ENCODE measurements at regions of chr5 and their contacts with region 1.

Region 1: DNA sequence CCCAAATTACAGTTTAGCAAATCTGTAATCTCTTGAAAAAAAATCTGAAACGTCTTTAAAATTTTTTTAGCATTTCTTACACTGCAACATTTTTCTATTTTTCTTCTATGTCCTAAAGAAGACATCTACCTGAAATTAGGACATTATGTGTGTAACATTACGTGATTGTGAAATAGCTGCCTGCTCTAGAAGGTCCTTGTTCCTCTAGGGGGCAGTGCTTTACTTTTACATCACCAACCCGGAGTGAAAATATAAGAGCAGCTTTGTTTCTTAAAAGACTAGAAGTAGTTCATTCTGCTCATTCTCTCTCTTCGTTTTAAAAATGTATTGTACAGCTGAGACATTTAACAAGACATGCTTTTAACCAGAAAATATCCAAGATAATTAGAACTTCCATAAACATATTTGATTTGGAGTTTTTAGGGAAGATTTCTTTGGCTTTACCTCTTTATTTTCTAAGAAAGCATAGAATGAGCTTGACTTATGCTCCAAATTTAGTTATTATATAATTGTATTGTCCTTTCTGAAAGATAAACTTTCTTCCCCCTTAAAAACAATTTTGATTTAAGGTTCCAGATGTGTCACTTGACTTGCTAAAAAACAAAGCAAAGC is 48.1 kb upstream of the RIOK2 start:
- DNase-seq: peak in 7 of 9 donors; percentile 19 to 58 (median 43)
- ATAC-seq: peak; percentile 73
- H3K4me3 ChIP-seq: no peak overlapping the region
- H3K4me3 Mint-ChIP-seq: no peak overlapping the region
- H3K27ac ChIP-seq: no peak overlapping the region
- H3K27ac Mint-ChIP-seq: no peak overlapping the region
- H3K4me1 ChIP-seq: no peaks in the 10 kb centered on the region
- H3K4me1 Mint-ChIP-seq: peaks cover 0 to 5% (median 0%) of the 10 kb centered on the region in 7 donors
- H3K27me3 ChIP-seq: no peaks in the 10 kb centered on the region
- H3K27me3 Mint-ChIP-seq: peaks cover 0 to 13% (median 0%) of the 10 kb centered on the region in 5 donors

Region 2: DNA sequence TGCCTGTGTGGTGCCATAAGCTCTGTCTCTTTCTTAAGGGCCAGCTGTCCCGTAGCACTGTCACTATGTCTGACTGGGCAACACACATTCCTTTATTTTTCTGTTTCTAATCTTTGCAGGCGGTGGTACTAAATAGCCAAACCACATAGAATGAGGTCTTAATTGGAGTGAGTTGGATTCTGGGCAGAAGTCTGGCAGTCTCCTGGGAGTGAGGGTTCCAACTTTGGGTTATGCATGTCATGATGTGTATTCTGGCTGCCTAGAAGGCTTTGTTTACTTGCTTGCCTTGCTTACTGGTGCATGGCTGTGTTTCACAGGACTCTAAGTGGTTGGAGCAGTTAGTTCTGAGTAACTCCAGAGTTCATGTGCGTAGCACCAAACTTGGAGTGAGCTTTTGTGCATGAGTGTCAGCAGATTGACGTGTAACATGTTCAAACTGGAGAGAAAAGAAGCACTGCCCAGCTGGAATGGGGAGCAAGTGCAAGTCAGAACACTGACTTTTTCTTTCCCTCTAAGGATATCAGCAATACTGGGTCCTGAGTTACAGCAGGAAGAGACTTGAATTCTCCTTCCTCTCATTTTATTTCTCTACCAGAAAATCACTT is 983.9 kb before region 1 on chr5:
- CTCF ChIA-PET with region 1: no interaction called
- POLR2A ChIA-PET with region 1: no interaction called
- intact Hi-C with region 1: no loop called
- DNase-seq: no peak
- ATAC-seq: no peak
- H3K4me3 ChIP-seq: no peak overlapping the region
- H3K4me3 Mint-ChIP-seq: no peak overlapping the region
- H3K27ac ChIP-seq: no peak overlapping the region
- H3K27ac Mint-ChIP-seq: no peak overlapping the region
- H3K4me1 ChIP-seq: no peaks in the 10 kb centered on the region
- H3K4me1 Mint-ChIP-seq: no peaks in the 10 kb centered on the region
- H3K27me3 ChIP-seq: no peaks in the 10 kb centered on the region
- H3K27me3 Mint-ChIP-seq: peaks cover 11 to 46% (median 39%) of the 10 kb centered on the region in 5 donors

Region 3: DNA sequence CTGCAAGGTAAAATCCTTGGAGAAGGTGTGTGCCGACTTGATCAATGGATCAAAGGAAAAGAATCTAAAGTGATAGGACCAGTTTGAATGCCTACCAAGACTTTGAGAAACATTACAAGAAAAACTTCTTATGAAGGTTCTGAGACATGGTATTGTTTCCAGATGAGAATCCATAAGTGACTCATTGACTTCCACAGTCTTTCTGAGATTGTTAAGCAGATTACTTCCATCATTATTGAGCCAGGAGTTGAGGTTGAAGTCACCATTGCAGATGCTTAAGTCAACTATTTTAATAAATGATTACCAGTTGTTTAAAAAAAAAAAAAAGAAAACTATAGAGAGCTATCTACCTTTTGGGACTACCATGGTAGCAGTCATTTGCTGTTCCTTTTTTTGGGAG is 288.2 kb before region 1 on chr5:
- CTCF ChIA-PET with region 1: no interaction called
- POLR2A ChIA-PET with region 1: no interaction called
- intact Hi-C with region 1: no loop called
- DNase-seq: no peak
- ATAC-seq: no peak
- H3K4me3 ChIP-seq: no peak overlapping the region
- H3K4me3 Mint-ChIP-seq: peak overlapping the region in 2 of 10 donors; percentile 23 to 34
- H3K27ac ChIP-seq: peak overlapping the region; percentile 52
- H3K27ac Mint-ChIP-seq: peak overlapping the region in 5 of 9 donors; percentile 16 to 89 (median 65)
- H3K4me1 ChIP-seq: peaks cover 24 to 51% of the 10 kb centered on the region in 2 donors
- H3K4me1 Mint-ChIP-seq: peaks cover 53 to 97% (median 88%) of the 10 kb centered on the region in 7 donors
- H3K27me3 ChIP-seq: no peaks in the 10 kb centered on the region
- H3K27me3 Mint-ChIP-seq: no peaks in the 10 kb centered on the region

Region 4: GRCh38 chr5:97534166-97534565 is 303.0 kb after region 1 on chr5:
- CTCF ChIA-PET with region 1: no interaction called
- POLR2A ChIA-PET with region 1: no interaction called
- intact Hi-C with region 1: loop called in 1 of 2 experiments (anchors 1 kb)
- DNase-seq: no peak
- ATAC-seq: peak; percentile 76
- H3K4me3 ChIP-seq: no peak overlapping the region
- H3K4me3 Mint-ChIP-seq: no peak overlapping the region
- H3K27ac ChIP-seq: no peak overlapping the region
- H3K27ac Mint-ChIP-seq: peak overlapping the region in 2 of 9 donors; percentile 5 to 39
- H3K4me1 ChIP-seq: no peaks in the 10 kb centered on the region
- H3K4me1 Mint-ChIP-seq: peaks cover 0 to 17% (median 0%) of the 10 kb centered on the region in 7 donors
- H3K27me3 ChIP-seq: no peaks in the 10 kb centered on the region
- H3K27me3 Mint-ChIP-seq: peaks cover 0 to 4% (median 3%) of the 10 kb centered on the region in 5 donors

Region 5: GRCh38 chr5:97600486-97600885 is 369.4 kb after region 1 on chr5:
- CTCF ChIA-PET with region 1: no interaction called
- POLR2A ChIA-PET with region 1: no interaction called
- intact Hi-C with region 1: no loop called
- DNase-seq: no peak
- ATAC-seq: no peak
- H3K4me3 ChIP-seq: no peak overlapping the region
- H3K4me3 Mint-ChIP-seq: no peak overlapping the region
- H3K27ac ChIP-seq: no peak overlapping the region
- H3K27ac Mint-ChIP-seq: no peak overlapping the region
- H3K4me1 ChIP-seq: no peaks in the 10 kb centered on the region
- H3K4me1 Mint-ChIP-seq: no peaks in the 10 kb centered on the region
- H3K27me3 ChIP-seq: no peaks in the 10 kb centered on the region
- H3K27me3 Mint-ChIP-seq: peaks cover 0 to 4% (median 0%) of the 10 kb centered on the region in 5 donors

Region 6: GRCh38 chr5:98349251-98349995 is 1118.3 kb after region 1 on chr5:
- CTCF ChIA-PET with region 1: no interaction called
- POLR2A ChIA-PET with region 1: no interaction called
- intact Hi-C with region 1: loop called in 1 of 2 experiments (anchors 2 kb)
- DNase-seq: no peak
- ATAC-seq: no peak
- H3K4me3 ChIP-seq: no peak overlapping the region
- H3K4me3 Mint-ChIP-seq: no peak overlapping the region
- H3K27ac ChIP-seq: no peak overlapping the region
- H3K27ac Mint-ChIP-seq: no peak overlapping the region
- H3K4me1 ChIP-seq: no peaks in the 10 kb centered on the region
- H3K4me1 Mint-ChIP-seq: no peaks in the 10 kb centered on the region
- H3K27me3 ChIP-seq: no peaks in the 10 kb centered on the region
- H3K27me3 Mint-ChIP-seq: peaks cover 0 to 3% (median 0%) of the 10 kb centered on the region in 5 donors

Region 7: GRCh38 chr5:98796197-98796972 is 1565.3 kb after region 1 on chr5:
- CTCF ChIA-PET with region 1: interaction called, 16 read pairs
- POLR2A ChIA-PET with region 1: no interaction called
- intact Hi-C with region 1: loop called (anchors 1 kb)
- DNase-seq: peak in 8 of 9 donors; percentile 28 to 62 (median 55)
- ATAC-seq: peak; percentile 73
- H3K4me3 ChIP-seq: no peak overlapping the region
- H3K4me3 Mint-ChIP-seq: no peak overlapping the region
- H3K27ac ChIP-seq: no peak overlapping the region
- H3K27ac Mint-ChIP-seq: peak overlapping the region in 1 of 9 donors; percentile 44
- H3K4me1 ChIP-seq: no peaks in the 10 kb centered on the region
- H3K4me1 Mint-ChIP-seq: peaks cover 0 to 20% (median 4%) of the 10 kb centered on the region in 7 donors
- H3K27me3 ChIP-seq: no peaks in the 10 kb centered on the region
- H3K27me3 Mint-ChIP-seq: peaks cover 0 to 2% (median 0%) of the 10 kb centered on the region in 5 donors

Region 8: DNA sequence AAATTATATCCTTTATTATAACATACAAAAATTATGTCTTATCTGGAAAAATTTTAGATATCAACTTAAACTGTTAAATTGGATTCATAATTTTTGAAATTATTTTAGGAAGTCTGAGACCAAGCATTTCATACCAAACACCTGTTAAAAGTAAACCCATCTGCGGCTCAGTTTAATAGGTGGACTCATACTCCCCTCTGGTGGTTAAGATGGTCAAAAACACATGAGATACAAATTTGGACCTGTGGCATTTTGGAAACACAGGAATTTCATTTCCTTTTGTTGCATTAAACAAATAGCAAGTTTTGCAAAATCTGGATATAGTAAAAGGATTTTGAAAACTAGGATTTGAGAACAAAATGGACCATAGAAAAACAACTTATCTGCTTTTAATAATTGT is 1596.0 kb after region 1 on chr5:
- CTCF ChIA-PET with region 1: no interaction called
- POLR2A ChIA-PET with region 1: no interaction called
- intact Hi-C with region 1: loop called in 1 of 2 experiments (anchors 1 kb)
- DNase-seq: peak in 5 of 9 donors; percentile 15 to 34 (median 22)
- ATAC-seq: no peak
- H3K4me3 ChIP-seq: no peak overlapping the region
- H3K4me3 Mint-ChIP-seq: no peak overlapping the region
- H3K27ac ChIP-seq: no peak overlapping the region
- H3K27ac Mint-ChIP-seq: no peak overlapping the region
- H3K4me1 ChIP-seq: no peaks in the 10 kb centered on the region
- H3K4me1 Mint-ChIP-seq: peaks cover 0 to 2% (median 0%) of the 10 kb centered on the region in 7 donors
- H3K27me3 ChIP-seq: no peaks in the 10 kb centered on the region
- H3K27me3 Mint-ChIP-seq: peaks cover 0 to 7% (median 0%) of the 10 kb centered on the region in 5 donors

Measured in naive thymus-derived CD4-positive, alpha-beta T cell (primary cell).